A549 (cell line): ENCODE measurements at regions of chr17 and their contacts with region 1.

Region 1: DNA sequence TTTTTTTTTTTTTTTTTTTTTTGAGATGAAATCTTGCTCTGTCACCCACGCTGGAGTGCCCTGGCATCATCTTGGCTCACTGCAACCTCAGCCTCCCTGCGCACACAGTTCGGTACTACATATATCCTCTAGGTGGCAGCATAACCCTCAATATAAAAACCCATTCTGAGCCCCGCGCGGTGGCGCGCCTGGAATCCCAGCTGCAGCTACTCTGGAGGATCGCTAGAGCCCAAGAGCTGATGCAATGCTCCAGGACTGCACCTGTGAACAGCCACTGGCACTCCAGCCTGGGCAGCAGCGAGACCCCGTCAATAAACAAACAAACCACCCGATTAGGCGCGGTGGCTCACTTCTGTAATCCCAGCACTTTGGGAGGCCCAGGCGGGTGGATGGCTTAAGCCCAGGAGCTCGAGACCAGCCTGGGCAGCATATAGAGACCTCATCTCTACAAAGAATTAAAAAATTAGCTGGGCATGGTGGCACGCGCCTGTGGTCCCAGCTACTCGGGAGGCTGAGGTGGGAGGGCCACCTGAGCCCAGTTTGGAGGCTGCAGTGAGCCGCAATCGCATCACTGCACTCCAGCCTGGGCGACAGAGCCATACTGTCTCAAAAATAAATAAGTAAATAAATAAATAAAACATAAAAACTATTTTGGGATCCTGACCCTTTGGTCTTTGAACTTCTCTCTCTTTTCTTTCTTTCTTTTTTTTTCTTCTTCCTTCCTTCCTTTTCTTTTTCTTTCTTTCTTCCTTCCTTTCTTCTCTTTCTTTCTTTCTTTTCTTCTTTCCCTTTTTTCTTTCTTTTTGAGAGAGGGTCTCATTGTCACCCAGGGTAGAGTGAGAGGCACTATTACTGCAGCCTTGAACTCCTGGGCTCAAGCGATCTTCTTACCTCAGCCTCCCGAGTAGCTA is 15.4 kb upstream of the AKAP10 start:
- DNase-seq: peak; percentile 77 to 94
- ATAC-seq: peak; percentile 98 to 100
- H3K4me3 ChIP-seq: peak overlapping the region; percentile 38
- H3K27ac ChIP-seq: peak overlapping the region; percentile 84
- H3K4me1 ChIP-seq: peaks cover 11% of the 10 kb centered on the region
- CTCF ChIP-seq: peak; percentile 97
- EP300 ChIP-seq: no peak
- POLR2A ChIP-seq: no peak
- RAD21 ChIP-seq: peak; percentile 98

Region 2: DNA sequence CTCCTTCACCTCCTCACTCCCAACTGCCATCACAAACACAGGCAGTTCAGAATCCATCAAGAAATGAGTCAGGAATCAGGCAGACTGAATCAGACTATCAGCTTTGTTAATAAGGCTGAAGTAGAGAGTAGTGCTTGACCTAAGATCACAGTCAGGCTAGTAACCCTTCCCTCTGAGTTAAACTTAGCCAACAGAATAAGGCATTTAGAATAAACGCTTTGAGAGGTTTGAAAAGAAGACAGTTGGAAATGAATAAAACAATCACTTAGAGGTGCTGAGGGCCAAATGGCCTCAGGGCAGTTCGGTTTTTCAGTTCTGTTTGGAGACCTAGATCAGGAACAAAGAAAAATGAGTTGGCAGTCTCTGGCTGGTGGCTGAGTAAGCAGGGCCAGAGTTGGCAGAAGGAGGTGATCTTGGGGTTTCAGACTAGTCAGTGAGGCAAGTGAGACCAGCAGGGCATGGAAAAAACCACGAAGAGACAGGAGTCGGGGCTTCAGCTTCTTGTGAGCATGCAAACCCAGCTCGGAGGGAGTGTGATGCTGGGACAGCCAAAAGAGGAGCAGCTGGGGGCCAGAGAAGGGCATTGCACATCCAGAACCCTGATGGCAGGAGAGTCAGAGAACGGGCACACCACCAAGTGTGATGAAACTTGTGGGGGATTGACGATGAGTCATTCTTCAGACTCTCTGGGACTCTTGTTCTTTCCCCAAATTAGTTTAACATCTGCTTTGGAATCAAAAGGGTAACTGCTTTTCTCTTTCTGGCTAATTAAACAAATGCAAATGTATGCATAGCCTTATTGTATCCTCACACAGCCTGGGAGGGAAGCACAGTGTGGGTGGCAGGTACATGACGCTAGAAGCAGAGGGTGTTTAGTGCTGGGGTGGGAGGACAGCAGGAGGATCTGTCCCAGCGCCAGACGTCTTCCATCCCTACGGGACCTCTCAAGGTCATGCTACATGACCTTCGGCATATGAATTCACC is 70.9 kb after region 1 on chr17:
- CTCF ChIA-PET with region 1: interaction called, 15 read pairs
- POLR2A ChIA-PET with region 1: interaction called, 3 read pairs
- DNase-seq: peak; percentile 86 to 91
- ATAC-seq: peak; percentile 84 to 86
- H3K4me3 ChIP-seq: peak overlapping the region; percentile 1; the same call in 1 of the 3 replicates
- H3K27ac ChIP-seq: peak overlapping the region; percentile 89 to 90
- H3K4me1 ChIP-seq: peaks cover 77% of the 10 kb centered on the region
- CTCF ChIP-seq: no peak
- EP300 ChIP-seq: peak; percentile 22 to 56; a peak in 2 of 5 replicates
- POLR2A ChIP-seq: no peak
- RAD21 ChIP-seq: peak in 1 of 2 experiments; percentile 13; a peak in 2 of 5 replicates

Region 3: DNA sequence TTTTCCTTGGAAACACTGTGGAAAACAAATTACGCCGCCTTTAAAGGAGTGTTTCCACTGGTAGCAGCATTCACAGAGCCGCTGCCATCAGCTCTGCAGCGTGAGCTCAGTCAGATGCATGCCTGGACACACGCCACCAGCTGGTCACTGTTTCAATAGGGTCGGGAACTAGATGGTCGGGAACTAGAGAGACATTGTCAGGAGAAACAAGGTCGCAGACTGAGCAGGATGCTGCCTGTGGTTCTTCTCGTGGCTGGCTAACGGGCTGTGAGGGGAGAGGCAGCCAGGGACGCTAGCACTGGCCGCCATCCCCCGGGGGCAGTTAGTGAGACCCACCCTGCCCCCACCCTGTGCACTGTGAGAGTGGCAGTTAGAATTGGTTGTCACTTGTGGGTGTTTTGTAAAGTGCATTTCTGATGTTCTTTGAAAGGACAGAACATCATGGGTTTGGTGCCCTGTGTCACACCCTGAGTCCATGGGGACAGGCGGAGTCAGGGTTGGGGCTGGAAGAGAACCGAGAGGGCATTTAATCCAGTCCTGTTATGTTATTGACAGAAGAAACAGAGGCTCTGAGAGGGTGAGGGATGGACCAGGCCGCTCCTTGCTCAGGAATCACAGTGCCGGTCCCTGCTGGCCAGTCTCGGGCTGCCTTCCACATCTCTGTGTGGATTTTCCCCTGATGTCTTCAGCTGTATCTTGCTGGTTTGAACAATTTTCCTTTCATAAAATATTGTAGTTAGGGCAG is 102.5 kb after region 1 on chr17:
- CTCF ChIA-PET with region 1: interaction called, 47 read pairs
- POLR2A ChIA-PET with region 1: no interaction called
- DNase-seq: peak; percentile 65 to 67
- ATAC-seq: peak; percentile 93 to 95
- H3K4me3 ChIP-seq: no peak overlapping the region
- H3K27ac ChIP-seq: peak overlapping the region; percentile 43 to 77; a peak in 5 of 6 replicates
- H3K4me1 ChIP-seq: peaks cover 22% of the 10 kb centered on the region
- CTCF ChIP-seq: peak; percentile 70
- EP300 ChIP-seq: no peak
- POLR2A ChIP-seq: no peak
- RAD21 ChIP-seq: peak; percentile 69 to 71

Region 4: DNA sequence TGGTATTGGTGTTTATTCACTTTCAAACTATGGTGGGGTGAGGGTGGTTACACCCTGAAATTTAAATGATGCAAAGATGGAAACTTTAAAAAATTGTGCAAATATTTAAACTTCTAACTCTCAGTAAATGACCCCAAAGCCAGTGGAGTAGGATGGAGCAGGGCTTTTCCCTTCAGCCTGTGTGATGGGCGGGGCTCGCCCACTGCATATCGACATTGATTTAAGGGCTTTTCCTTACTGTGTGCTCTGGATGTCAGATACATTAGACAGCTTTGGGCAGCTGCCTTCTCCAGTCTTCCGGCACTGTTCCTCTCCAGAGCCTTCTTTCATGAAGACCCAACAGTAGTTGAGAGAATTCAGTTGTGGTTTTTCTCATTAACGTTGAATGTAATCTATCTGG is 116.0 kb after region 1 on chr17:
- CTCF ChIA-PET with region 1: interaction called, 111 read pairs
- POLR2A ChIA-PET with region 1: no interaction called
- DNase-seq: no peak
- ATAC-seq: no peak
- H3K4me3 ChIP-seq: no peak overlapping the region
- H3K27ac ChIP-seq: no peak overlapping the region
- H3K4me1 ChIP-seq: peaks cover under 1% of the 10 kb centered on the region; the same call in 1 of the 3 replicates
- CTCF ChIP-seq: no peak
- EP300 ChIP-seq: no peak
- POLR2A ChIP-seq: no peak
- RAD21 ChIP-seq: no peak

Region 5: GRCh38 chr17:20141198-20141972 is 148.3 kb after region 1 on chr17:
- CTCF ChIA-PET with region 1: interaction called, 15 read pairs
- POLR2A ChIA-PET with region 1: no interaction called
- DNase-seq: no peak
- ATAC-seq: no peak
- H3K4me3 ChIP-seq: no peak overlapping the region
- H3K27ac ChIP-seq: no peak overlapping the region
- H3K4me1 ChIP-seq: no peaks in the 10 kb centered on the region
- CTCF ChIP-seq: no peak
- EP300 ChIP-seq: no peak
- POLR2A ChIP-seq: no peak
- RAD21 ChIP-seq: no peak

Region 6: DNA sequence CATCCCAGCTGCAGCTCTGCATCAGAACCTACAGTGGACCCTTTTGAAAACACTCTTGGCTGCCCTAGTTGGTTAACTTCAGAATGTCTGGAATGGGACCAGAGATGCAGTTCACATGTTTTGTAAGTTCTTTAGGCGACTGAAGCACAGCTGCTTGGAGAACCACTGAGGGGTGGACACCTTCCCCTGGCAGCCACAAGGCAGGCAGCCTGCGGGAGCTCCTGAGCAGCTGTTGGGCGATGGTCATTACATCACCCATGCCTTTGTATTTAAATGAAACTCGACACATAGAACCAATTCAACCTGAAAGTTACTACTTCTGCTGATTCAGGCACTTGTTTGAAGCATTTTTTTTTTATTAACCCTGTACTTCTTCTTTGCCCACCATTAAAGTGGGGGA is 322.8 kb after region 1 on chr17:
- CTCF ChIA-PET with region 1: interaction called, 21 read pairs
- POLR2A ChIA-PET with region 1: no interaction called
- DNase-seq: no peak
- ATAC-seq: no peak
- H3K4me3 ChIP-seq: no peak overlapping the region
- H3K27ac ChIP-seq: no peak overlapping the region
- H3K4me1 ChIP-seq: no peaks in the 10 kb centered on the region
- CTCF ChIP-seq: no peak
- EP300 ChIP-seq: no peak
- POLR2A ChIP-seq: no peak
- RAD21 ChIP-seq: no peak